H1 (cell line): ENCODE measurements at regions of chr16 and their contacts with region 1.

Region 1: DNA sequence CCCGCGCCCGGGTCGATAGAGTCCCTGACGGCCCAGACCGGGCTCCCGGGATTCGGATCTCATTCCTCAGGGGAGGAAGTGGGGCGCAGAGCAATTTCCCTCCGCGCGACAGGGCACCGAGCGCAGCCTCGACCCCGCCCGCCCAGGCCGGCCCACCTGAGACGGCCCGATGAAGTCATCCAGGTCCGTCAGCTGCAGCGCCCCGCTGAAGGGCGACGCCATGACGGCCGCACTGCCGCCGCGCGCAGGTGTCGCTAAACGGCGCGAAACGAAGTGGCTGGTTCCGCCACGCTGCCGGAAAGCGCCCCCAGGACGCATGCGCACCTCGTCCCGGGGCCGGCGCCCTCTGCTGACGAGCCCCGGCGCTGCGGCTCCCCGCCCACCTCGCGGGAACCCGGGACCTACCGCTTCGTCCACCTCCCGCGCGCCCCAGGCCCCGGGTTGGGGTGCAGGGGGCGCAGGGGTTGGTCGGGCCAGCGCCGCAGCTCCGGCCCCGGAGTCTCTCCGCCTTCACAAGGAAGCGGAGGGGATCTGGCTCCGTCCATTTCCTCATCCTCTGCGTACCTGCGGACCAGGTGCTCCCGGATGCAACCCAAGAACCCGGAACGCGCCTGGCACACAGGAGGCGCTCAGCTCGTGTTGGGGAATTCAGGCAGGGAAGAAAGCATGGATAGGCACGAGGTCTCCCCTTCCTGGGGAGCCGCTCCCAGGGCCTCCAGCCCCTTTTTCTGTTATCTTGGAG is at the start of gene CIAO3:
- DNase-seq: peak in 1 of 2 experiments; percentile 99
- H3K4me3 ChIP-seq: peak within 1 kb of the TSS; percentile 62 to 90 (median 81)
- H3K27ac ChIP-seq: peak within 1 kb of the TSS; percentile 84
- H3K4me1 ChIP-seq: peaks cover 0 to 9% (median 4%) of the 10 kb centered on the region in 4 experiments; a peak in 5 of 7 replicates
- H3K27me3 ChIP-seq: no peaks in the 10 kb centered on the region
- CTCF ChIP-seq: peak; percentile 72 to 91 (median 82); a peak in 3 of 4 replicates
- EP300 ChIP-seq: no peak
- POLR2A ChIP-seq: peak in 1 of 2 experiments; percentile 66; a peak in 1 of 3 replicates
- RAD21 ChIP-seq: no peak; a peak in 2 of 4 replicates
- total RNA-seq, gene CIAO3: 20.4 and 21.0 TPM in 2 replicates

Region 2: DNA sequence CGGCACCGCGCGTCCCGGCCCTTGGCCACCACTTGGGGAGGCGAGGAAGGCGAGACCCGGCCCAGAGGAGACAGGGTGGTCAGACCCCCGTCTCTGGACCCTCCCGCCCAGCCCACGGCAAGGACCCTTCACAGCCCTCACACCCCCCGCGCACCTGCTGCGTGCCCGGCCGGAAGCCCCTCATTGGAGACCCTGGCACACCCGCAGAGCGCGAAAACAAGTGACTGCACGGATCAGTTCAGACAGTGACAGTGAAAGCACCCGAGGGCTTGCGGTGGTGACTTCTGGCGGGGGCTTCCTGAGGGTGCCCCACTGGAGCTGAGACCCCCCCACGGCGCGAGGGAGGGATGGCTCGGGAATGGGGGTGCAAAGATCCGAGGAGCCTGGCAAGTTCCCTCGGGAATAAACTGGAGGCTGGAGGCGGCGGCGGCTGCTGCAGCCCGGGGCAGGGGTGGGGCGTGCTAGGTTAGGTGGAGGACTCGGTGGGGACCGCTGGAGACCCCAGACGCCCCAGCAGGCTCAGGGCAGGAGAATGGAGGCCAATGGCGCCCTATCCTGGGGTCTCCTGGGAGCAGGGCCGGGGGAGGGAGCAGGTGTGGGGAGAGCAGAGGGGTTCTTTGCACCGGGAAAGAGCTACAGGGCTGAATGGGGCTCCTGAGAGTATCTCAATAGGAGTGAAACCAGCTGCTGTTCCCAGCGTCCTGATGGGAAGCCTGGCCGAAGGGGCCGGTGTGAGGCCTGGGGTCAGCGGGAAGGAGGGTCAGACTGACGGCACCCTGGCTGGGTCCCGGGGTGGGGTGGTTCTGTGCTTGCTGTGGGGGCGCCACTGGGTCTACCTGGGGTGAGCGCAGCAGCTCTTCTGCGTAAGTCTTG is 34.5 kb before region 1 on chr16:
- CTCF ChIA-PET with region 1: interaction called, 977 read pairs
- POLR2A ChIA-PET with region 1: interaction called, 353 read pairs
- DNase-seq: peak in 1 of 2 experiments; percentile 71
- H3K4me3 ChIP-seq: peak overlapping the region; percentile 34 to 69 (median 50)
- H3K27ac ChIP-seq: no peak overlapping the region
- H3K4me1 ChIP-seq: peaks cover 0 to 9% (median 5%) of the 10 kb centered on the region in 4 experiments; a peak in 4 of 7 replicates
- H3K27me3 ChIP-seq: peaks cover 52 to 86% (median 72%) of the 10 kb centered on the region in 4 experiments
- CTCF ChIP-seq: no peak
- EP300 ChIP-seq: no peak
- POLR2A ChIP-seq: no peak
- RAD21 ChIP-seq: no peak

Region 3: DNA sequence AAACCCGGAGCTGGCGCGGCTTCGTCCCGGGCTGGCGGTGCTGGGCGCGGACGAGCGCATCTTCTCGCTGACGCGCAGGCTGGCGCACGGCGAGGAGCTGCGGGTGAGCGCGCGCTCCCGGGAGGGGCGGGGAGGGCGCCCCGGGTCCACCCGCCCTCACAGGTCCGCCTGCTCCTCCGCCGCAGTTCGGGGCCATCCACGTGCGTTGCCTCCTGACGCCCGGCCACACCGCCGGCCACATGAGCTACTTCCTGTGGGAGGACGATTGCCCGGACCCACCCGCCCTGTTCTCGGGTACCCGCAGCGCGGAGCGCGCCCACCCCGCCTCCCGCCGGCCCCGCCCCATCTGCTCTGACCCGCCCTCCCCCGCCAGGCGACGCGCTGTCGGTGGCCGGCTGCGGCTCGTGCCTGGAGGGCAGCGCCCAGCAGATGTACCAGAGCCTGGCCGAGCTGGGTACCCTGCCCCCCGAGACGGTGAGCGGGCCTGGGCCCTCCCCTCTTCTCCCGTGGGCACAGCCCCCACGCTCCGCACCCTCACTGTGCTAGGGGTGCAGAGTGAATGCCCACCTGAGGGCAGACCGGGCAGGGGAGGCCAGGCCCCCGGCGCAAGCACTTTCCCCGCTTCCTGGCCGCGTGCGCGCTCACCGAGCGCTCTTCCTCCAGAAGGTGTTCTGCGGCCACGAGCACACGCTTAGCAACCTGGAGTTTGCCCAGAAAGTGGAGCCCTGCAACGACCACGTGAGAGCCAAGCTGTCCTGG is 12.6 kb before region 1 on chr16:
- CTCF ChIA-PET with region 1: interaction called, 977 read pairs
- POLR2A ChIA-PET with region 1: interaction called, 353 read pairs
- DNase-seq: no peak
- H3K4me3 ChIP-seq: peak overlapping the region; percentile 24 to 83 (median 37)
- H3K27ac ChIP-seq: no peak overlapping the region; the same call in 1 of the 2 replicates
- H3K4me1 ChIP-seq: peaks cover 0 to 14% (median 8%) of the 10 kb centered on the region in 4 experiments; a peak in 5 of 7 replicates
- H3K27me3 ChIP-seq: peaks cover 0 to 16% (median 5%) of the 10 kb centered on the region in 4 experiments; a peak in 4 of 7 replicates
- CTCF ChIP-seq: no peak
- EP300 ChIP-seq: no peak
- POLR2A ChIP-seq: 0 out of 3 replicates have a peak, but pooled peaks of 1 of the 2 experiments have one; percentile 15
- RAD21 ChIP-seq: no peak

Region 4: DNA sequence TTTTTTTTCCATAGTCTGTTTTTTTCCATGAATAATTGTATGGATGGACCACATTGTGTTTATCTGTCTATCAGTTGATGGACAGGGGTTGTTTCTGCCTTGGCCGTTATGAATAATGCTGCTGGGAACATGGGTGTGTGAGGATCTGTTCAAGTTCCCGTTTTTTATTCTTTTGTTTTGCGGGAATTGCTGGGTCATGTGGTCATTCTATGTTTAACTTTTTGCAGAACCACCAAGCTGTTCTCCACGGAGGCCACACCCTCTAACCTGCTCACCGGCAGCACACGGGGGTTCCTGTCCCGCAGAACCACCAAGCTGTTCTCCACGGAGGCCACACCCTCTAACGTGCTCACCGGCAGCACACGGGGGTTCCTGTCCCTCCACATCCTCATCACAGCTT is 13.7 kb after region 1 on chr16:
- CTCF ChIA-PET with region 1: interaction called, 38 read pairs
- POLR2A ChIA-PET with region 1: interaction called, 6 read pairs
- DNase-seq: no peak
- H3K4me3 ChIP-seq: no peak overlapping the region
- H3K27ac ChIP-seq: no peak overlapping the region
- H3K4me1 ChIP-seq: peaks cover 3 to 12% (median 5%) of the 10 kb centered on the region in 4 experiments; a peak in 5 of 7 replicates
- H3K27me3 ChIP-seq: no peaks in the 10 kb centered on the region
- CTCF ChIP-seq: no peak
- EP300 ChIP-seq: no peak
- POLR2A ChIP-seq: no peak
- RAD21 ChIP-seq: no peak

Region 5: DNA sequence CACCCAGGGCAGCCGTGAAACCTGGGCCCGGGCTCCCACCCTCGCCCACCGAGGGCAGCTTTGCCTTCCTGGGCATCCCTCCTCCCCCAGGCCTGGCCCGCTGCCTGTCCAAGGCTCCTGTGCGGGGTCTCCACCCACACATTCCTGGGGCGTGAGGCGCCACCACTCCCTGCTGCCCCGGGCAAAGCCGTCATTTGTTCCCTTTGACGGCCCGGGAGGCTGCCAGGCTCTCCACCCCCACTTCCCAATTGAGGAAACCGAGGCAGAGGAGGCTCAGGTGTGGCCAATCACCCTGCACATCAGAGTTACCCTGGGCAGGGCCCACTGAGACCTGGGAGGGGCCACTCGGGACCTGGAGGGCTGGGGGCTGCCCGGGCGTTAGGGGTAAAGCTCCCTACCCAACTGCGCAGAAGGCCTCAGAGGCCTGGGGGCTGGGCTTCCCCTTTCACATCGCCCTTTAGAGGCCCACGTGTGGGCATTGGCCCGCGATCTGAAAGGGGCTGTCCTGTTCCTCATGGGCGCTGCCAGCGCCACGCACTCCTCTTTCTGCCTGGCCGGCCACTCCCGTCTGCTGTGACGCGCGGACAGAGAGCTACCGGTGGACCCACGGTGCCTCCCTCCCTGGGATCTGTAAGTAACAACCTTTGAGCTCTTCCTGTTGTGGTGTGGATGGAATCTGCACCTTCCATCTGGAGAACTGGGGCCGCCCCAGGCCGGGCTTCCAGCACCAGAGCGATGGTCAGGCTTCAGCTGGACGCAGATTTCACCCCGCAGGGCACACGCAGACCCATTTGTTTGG is 19.8 kb after region 1 on chr16 and contains the start of gene MSLN:
- CTCF ChIA-PET with region 1: interaction called, 38 read pairs
- POLR2A ChIA-PET with region 1: interaction called, 6 read pairs
- DNase-seq: no peak
- H3K4me3 ChIP-seq: no peak within 1 kb of the TSS
- H3K27ac ChIP-seq: no peak within 1 kb of the TSS
- H3K4me1 ChIP-seq: peaks cover 0 to 2% (median 0%) of the 10 kb centered on the region in 4 experiments; a peak in 1 of 7 replicates
- H3K27me3 ChIP-seq: no peaks in the 10 kb centered on the region
- CTCF ChIP-seq: no peak
- EP300 ChIP-seq: no peak
- POLR2A ChIP-seq: no peak
- RAD21 ChIP-seq: no peak
- total RNA-seq, gene MSLN: 0.28 TPM in 1 of 2 replicates, not detected in the other

Region 6: GRCh38 chr16:774086-775001 is 33.4 kb after region 1 on chr16:
- CTCF ChIA-PET with region 1: interaction called, 424 read pairs
- POLR2A ChIA-PET with region 1: interaction called, 4 read pairs
- DNase-seq: no peak
- H3K4me3 ChIP-seq: no peak overlapping the region
- H3K27ac ChIP-seq: no peak overlapping the region
- H3K4me1 ChIP-seq: peaks cover 0 to 1% (median under 1%) of the 10 kb centered on the region in 4 experiments; a peak in 2 of 7 replicates
- H3K27me3 ChIP-seq: peaks cover 0 to under 1% (median 0%) of the 10 kb centered on the region in 4 experiments; a peak in 2 of 7 replicates
- CTCF ChIP-seq: no peak
- EP300 ChIP-seq: no peak
- POLR2A ChIP-seq: no peak
- RAD21 ChIP-seq: no peak